ENCODE measurements at regions of chr19 and their contacts with region 1.

Region 1: GRCh38 chr19:50431343-50432220 is 1.1 kb upstream of the MYBPC2 start:
- DNase-seq: peak; percentile 79 to 93
- ATAC-seq: peak; percentile 72 to 86 (median 82)
- H3K4me3 ChIP-seq: peak overlapping the region; percentile 79
- H3K27ac ChIP-seq: peak overlapping the region; percentile 87
- H3K4me1 ChIP-seq: peaks cover 18% of the 10 kb centered on the region
- H3K27me3 ChIP-seq: peaks cover 0 to 11% (median 0%) of the 10 kb centered on the region in 3 donors
- CTCF ChIP-seq: no peak

Region 2: DNA sequence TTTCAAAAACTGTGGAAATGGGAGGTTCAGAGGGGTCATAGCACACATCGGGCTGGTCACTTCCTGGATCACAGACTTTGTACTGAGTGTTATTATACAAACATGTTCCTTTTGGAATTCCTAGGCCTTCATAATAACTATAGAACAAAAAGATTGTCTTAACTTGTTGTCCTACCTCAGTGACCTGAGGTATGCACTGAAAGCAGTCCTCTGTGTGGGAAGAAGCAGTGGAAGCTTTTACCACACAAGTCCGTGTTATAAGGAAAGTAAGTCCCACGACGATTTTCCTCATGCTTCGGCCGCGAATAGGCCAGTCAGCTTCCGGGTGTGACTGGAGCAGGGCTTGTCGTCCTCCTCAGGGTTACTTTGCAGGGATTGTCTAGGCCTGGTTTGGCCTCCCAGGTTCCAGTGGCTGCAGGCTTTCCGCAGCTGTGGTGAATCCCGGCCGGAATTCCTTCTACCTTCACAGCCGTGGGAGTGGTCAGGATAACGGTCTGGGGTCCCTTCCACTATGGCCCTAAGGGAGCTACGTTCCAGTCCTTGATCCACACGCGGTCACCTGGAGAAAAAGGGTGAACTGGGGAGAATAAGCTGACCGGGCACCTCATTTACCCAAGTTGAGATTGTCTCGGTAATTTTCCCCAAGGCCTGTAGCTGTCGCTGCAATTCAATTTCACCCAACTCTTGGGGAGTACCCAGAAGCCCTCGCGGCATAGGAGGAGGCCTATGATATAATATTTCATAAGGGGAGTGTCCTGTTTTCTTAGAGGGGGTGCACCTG is 82.1 kb before region 1 on chr19:
- intact Hi-C with region 1: no loop called
- DNase-seq: no peak
- ATAC-seq: no peak
- H3K4me3 ChIP-seq: no peak overlapping the region
- H3K27ac ChIP-seq: no peak overlapping the region
- H3K4me1 ChIP-seq: no peaks in the 10 kb centered on the region
- H3K27me3 ChIP-seq: no peaks in the 10 kb centered on the region
- CTCF ChIP-seq: no peak

Region 3: DNA sequence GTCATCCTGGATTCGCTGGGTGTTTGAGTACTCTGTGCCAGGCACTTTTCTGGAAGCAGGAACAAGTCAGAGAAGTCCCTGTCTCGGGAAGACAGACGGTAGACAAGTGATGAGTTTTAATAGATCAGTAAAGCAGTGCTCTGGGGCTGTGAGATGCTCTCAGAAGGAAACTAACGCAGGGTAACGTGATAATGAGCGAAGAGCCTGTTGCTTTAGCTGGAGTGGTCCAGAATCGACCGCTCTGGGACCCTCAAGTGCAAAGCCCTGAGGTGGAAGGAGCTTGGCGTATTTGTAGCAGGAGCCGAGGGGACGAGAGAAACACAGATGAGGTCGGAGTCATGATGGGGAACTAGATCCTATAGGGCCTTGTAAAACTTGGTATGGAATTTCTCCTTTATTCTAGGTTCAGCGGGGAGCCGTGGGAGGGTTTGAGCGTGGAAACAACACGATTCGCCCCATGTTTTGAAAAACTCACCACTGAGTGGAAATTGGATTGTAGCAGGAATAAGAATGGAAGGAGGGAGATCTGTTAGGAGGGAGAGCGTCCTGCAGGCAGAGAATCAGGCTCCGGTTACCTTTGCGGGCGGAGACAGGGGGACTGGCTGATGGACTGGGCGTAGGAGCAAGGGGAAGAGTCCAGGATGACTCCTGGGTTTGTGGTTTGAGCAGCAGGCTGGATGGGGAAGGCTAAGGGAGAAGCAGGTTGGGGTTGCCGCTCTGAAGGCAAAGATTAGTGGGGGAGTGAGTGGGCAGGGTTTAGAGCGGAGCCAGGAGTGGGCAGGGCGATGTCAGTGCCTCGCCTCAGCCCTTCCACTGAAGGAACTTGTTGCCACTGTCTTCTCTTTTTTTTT is 46.7 kb before region 1 on chr19:
- intact Hi-C with region 1: loop called in 1 of 2 experiments (anchors 5 kb)
- DNase-seq: no peak
- ATAC-seq: no peak
- H3K4me3 ChIP-seq: peak overlapping the region; percentile 74
- H3K27ac ChIP-seq: peak overlapping the region; percentile 79
- H3K4me1 ChIP-seq: peaks cover 8% of the 10 kb centered on the region
- H3K27me3 ChIP-seq: no peaks in the 10 kb centered on the region
- CTCF ChIP-seq: no peak

Region 4: GRCh38 chr19:50500060-50500752 is 68.6 kb after region 1 on chr19:
- intact Hi-C with region 1: loop called in 1 of 2 experiments (anchors 2 kb)
- DNase-seq: peak; percentile 83 to 92
- ATAC-seq: peak; percentile 76 to 85 (median 82)
- H3K4me3 ChIP-seq: peak overlapping the region; percentile 68
- H3K27ac ChIP-seq: peak overlapping the region; percentile 94
- H3K4me1 ChIP-seq: peaks cover 7% of the 10 kb centered on the region
- H3K27me3 ChIP-seq: no peaks in the 10 kb centered on the region
- CTCF ChIP-seq: peak; percentile 19

Measured in psoas muscle (tissue), 8 donors.